ENCODE measurements at regions of chr5 and their contacts with region 1.

Region 1: GRCh38 chr5:43514816-43515677 is at the start of gene C5orf34:
- DNase-seq: peak; percentile 91
- H3K4me3 Mint-ChIP-seq: peak within 1 kb of the TSS; percentile 92
- H3K27ac Mint-ChIP-seq: peak within 1 kb of the TSS; percentile 96
- H3K4me1 Mint-ChIP-seq: peaks cover 34% of the 10 kb centered on the region
- H3K27me3 Mint-ChIP-seq: no peaks in the 10 kb centered on the region
- total RNA-seq, gene C5orf34: 6.3 and 8.3 TPM in 2 replicates

Region 2: GRCh38 chr5:43556857-43557542 is 42.0 kb after region 1 on chr5 and contains the start of gene PAIP1:
- intact Hi-C with region 1: loop called (anchors 1 kb)
- DNase-seq: peak; percentile 84
- H3K4me3 Mint-ChIP-seq: peak within 1 kb of the TSS; percentile 86
- H3K27ac Mint-ChIP-seq: peak within 1 kb of the TSS; percentile 90
- H3K4me1 Mint-ChIP-seq: peaks cover 8% of the 10 kb centered on the region
- H3K27me3 Mint-ChIP-seq: peaks cover 9% of the 10 kb centered on the region
- total RNA-seq, gene PAIP1: 56.8 and 58.0 TPM in 2 replicates